Dendritic cell treated with granulocyte-macrophage colony-stimulating factor and Interleukin-4, amounts not matched to agents 40 ng/mL and 50 ng/mL, for 4 days (primary cell): ENCODE measurements at regions of chr3 and their contacts with region 1.

Region 1: GRCh38 chr3:100590114-100590839 is 19.1 kb upstream of the ADGRG7 start:
- H3K4me3 Mint-ChIP-seq: peak overlapping the region; percentile 22
- H3K27ac Mint-ChIP-seq: no peak overlapping the region
- H3K4me1 Mint-ChIP-seq: no peaks in the 10 kb centered on the region
- H3K27me3 Mint-ChIP-seq: no peaks in the 10 kb centered on the region

Region 2: DNA sequence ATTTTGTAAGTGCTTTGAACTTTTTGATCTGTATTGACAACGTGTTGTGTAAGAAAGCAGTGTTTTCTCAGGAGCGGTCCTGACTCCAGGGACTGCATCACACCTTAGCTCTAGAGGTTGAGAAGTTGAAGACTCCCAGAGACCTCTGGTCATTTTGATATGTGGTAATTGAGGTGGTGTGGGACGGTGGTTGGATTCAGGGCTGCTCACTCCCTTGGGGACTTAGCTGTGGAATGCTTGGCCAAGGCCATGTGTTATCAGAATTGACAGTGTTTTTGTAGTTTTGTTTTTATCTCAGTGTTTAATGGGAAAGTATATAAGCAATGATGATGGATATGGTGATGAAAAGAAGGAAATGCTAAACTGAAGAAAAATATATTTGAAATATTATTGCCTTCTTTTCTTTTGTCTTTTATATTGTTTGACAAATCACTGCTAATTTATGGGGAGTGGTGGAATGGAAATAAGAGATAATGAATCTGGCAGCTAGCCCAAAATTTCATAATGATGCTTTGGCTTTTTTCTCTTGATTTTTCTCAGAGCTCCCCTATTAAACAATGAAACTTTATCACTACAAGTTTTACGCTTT is 756.6 kb before region 1 on chr3:
- intact Hi-C with region 1: loop called (anchors 5 kb)
- H3K4me3 Mint-ChIP-seq: no peak overlapping the region
- H3K27ac Mint-ChIP-seq: no peak overlapping the region
- H3K4me1 Mint-ChIP-seq: peaks cover 4% of the 10 kb centered on the region
- H3K27me3 Mint-ChIP-seq: no peaks in the 10 kb centered on the region

Region 3: DNA sequence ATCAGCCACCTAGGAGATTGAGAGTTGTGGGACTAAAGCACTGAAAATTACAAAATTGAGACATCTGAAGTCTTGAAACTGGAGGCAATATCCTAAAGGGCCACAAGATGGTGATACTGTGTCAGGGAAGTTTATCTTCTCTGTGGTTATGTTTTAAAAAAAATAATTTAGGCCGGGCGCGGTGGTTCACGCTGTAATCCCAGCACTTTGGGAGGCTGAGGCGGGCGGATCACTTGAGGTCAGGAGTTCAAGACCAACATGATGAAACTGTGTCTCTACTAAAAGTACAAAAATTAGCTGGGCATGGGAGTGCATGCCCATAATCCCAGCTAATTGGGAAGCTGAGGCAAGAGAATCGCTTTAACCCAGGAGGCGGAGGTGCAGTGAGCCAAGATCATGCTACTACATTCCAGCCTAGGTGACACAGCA is 273.6 kb before region 1 on chr3:
- intact Hi-C with region 1: loop called (anchors 1 kb)
- H3K4me3 Mint-ChIP-seq: no peak overlapping the region
- H3K27ac Mint-ChIP-seq: no peak overlapping the region
- H3K4me1 Mint-ChIP-seq: no peaks in the 10 kb centered on the region
- H3K27me3 Mint-ChIP-seq: no peaks in the 10 kb centered on the region

Region 4: DNA sequence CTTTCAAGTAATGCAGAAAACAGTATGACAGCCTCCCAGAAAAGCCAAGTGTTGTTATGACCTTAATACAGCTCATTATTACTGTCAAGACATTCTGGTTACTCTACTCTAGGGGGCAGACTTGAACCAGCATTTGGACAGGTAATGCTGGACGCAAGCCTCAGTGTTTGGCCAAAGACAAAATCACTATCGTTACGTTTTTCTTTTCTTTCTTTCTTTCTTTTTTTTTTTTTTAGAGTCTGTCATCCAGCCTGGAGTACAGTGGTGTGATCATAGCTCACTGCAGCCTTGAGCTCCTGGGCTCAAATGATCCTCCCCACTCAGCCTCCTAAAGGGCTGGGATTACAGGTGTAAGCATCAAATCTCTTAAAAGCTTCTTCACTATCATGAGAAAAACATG is 127.3 kb before region 1 on chr3:
- intact Hi-C with region 1: loop called (anchors 1 kb)
- H3K4me3 Mint-ChIP-seq: no peak overlapping the region
- H3K27ac Mint-ChIP-seq: no peak overlapping the region
- H3K4me1 Mint-ChIP-seq: peaks cover 15% of the 10 kb centered on the region
- H3K27me3 Mint-ChIP-seq: no peaks in the 10 kb centered on the region

Region 5: DNA sequence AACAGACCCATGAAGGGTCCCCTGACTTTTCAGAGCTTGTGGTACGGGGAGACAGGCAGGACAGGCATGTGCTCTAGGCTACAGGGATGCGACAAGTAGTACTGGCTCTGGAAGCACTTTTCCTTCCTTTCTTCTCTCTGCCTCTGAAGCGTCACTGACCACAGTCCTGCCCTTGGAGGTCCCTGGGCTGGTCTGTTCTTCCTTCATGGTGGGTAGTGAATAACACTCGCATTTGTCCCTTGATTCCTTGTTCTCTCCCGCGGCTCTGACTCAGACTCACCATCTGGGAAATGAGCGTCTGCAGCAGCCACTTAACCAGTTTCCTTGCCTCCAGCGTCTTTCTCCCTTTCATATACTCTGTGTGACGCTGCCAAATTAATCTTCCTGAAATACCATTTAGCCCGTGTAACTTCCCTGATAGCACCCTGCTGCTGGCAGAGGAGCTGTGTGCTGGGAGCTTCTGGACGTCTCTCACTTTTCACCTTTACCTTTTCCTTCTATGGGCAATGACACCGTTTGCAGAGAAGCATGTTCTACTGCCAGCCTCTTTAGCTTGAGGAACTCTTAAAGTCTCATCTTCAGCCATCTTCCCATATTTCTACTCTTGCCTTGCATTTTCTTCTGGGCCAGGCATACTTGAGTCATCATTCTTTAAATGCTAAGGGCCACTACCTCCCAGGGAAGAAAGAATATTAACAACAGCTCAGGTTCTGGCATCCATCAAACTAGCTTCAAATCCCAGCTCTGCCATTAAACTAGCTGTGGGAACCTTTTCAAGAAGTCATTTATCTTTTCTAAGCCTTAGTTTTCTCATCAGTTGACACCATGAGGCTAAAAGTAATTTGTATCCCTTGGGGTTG is 64.3 kb before region 1 on chr3:
- intact Hi-C with region 1: no loop called
- H3K4me3 Mint-ChIP-seq: no peak overlapping the region
- H3K27ac Mint-ChIP-seq: no peak overlapping the region
- H3K4me1 Mint-ChIP-seq: peaks cover 28% of the 10 kb centered on the region
- H3K27me3 Mint-ChIP-seq: no peaks in the 10 kb centered on the region

Region 6: DNA sequence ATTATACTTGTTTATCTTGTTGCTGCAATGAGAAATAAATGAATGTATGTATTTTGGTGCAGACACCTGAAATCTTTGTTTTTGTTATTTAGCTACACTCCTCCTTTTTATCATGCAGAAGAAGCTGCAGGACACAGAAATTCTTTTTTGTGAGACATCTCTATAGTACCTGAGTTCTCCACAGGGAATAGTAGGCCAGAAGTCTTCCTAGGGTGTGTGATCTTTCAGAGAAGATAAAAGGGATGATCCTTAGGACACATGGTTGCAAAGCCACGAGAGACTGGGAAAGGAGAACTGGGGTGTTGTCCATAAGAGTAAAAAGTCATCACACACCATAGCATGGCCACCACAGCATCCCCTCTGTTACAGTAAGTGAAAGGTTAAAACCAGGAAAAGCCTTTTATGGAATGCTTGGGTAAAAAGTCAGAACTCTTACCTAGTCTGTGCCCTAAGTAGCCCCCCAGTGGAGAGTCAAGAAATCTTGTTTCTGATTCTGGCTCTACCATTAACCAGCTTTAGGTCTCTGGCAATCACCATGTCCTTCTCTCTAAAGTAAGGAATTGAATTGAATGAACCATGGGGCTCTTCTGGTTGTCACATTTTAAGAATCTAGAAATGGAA is 12.8 kb before region 1 on chr3:
- intact Hi-C with region 1: no loop called
- H3K4me3 Mint-ChIP-seq: no peak overlapping the region
- H3K27ac Mint-ChIP-seq: no peak overlapping the region
- H3K4me1 Mint-ChIP-seq: no peaks in the 10 kb centered on the region
- H3K27me3 Mint-ChIP-seq: no peaks in the 10 kb centered on the region

Region 7: GRCh38 chr3:100634493-100635272 is 44.4 kb after region 1 on chr3:
- intact Hi-C with region 1: no loop called
- H3K4me3 Mint-ChIP-seq: no peak overlapping the region
- H3K27ac Mint-ChIP-seq: no peak overlapping the region
- H3K4me1 Mint-ChIP-seq: no peaks in the 10 kb centered on the region
- H3K27me3 Mint-ChIP-seq: no peaks in the 10 kb centered on the region